HepG2 (cell line): ENCODE measurements at regions of chr20 and their contacts with region 1.

Region 1: DNA sequence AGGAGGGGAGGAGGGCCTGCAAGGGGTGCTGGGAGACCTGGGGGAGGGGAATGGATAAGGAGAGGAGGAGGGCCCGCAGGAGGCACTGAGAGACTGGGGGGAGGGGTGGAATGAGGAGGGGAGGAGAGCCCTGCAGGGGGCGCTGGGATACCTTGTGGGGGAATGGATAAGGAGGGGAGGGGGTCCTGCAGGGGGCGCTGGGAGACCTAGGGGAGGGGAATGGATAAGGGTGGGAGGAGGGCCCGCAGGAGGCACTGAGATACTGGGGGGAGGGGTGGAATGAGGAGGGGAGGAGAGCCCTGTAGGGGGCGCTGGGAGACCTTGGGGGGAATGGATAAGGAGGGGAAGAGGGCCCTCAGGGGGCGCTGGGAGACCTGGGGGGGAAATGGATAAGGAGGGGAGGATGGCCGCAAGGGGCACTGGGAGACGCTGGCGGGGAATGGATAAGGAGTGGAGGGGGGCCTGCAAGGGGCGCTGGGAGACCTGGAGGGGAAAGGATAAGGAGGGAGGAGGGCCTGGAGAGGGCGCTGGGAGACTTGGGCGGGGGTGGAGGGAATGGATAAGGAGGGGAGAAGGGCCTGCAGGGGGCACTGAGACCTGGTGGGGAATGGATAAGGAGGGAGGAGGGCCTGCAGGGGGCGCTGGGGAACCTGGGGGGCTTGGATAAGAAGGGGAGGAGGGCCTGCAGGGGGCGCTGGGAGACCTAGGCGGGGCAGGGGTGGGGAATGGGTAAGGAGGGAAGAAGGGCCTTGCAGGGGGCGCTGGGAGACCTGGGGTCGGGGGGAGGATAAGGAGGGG is 1.3 kb upstream of the CTCFL start:
- DNase-seq: peak; percentile 50
- ATAC-seq: peak; percentile 68
- H3K4me3 ChIP-seq: peak overlapping the region in 1 of 3 experiments; percentile 45; a peak in 1 of 6 replicates
- H3K27ac ChIP-seq: no peak overlapping the region
- H3K4me1 ChIP-seq: peaks cover 46% of the 10 kb centered on the region
- H3K27me3 ChIP-seq: peaks cover 2 to 23% of the 10 kb centered on the region in 2 experiments; a peak in 2 of 5 replicates
- CTCF ChIP-seq: peak; percentile 62
- EP300 ChIP-seq: no peak
- POLR2A ChIP-seq: no peak
- RAD21 ChIP-seq: no peak

Region 2: DNA sequence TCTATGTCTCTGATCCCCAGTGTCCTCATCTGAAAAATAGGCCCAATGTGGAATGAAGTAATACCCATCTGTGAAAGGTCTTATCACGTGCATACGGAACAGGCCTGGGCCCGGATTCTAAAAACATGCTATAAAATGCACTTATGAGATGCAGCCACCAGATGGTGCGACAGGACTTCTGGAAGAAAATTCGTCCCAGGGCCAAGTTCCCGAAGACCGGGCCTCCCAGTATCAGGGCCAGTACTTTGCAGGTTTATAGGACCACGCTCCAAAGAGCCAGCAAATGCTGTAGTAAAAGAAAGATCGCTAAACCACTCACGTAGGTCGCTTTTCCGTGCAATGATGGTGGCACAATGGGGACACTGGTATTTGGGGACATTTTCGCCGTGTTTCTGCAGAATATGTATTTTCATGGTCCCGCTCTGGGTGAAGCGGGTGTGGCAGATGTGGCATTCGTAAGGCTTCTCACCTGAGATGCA is 12.0 kb before region 1 on chr20:
- CTCF ChIA-PET with region 1: interaction called, 19 read pairs
- POLR2A ChIA-PET with region 1: no interaction called
- in situ Hi-C with region 1: no loop called
- intact Hi-C with region 1: no loop called
- DNase-seq: peak; percentile 73
- ATAC-seq: peak; percentile 87
- H3K4me3 ChIP-seq: no peak overlapping the region
- H3K27ac ChIP-seq: no peak overlapping the region
- H3K4me1 ChIP-seq: 0 out of 2 replicates have a peak, but pooled peaks cover 4% of the 10 kb centered on the region
- H3K27me3 ChIP-seq: peaks cover 0 to 43% of the 10 kb centered on the region in 2 experiments; a peak in 3 of 5 replicates
- CTCF ChIP-seq: peak; percentile 95
- EP300 ChIP-seq: no peak
- POLR2A ChIP-seq: no peak
- RAD21 ChIP-seq: peak; percentile 98

Region 3: GRCh38 chr20:57540890-57541580 is 14.7 kb after region 1 on chr20:
- CTCF ChIA-PET with region 1: no interaction called
- POLR2A ChIA-PET with region 1: no interaction called
- in situ Hi-C with region 1: no loop called
- intact Hi-C with region 1: no loop called
- DNase-seq: no peak
- ATAC-seq: peak; percentile 24
- H3K4me3 ChIP-seq: no peak overlapping the region
- H3K27ac ChIP-seq: no peak overlapping the region
- H3K4me1 ChIP-seq: peaks cover 32% of the 10 kb centered on the region
- H3K27me3 ChIP-seq: peaks cover 1 to 51% of the 10 kb centered on the region in 2 experiments; a peak in 2 of 5 replicates
- CTCF ChIP-seq: no peak
- EP300 ChIP-seq: no peak
- POLR2A ChIP-seq: no peak
- RAD21 ChIP-seq: no peak

Region 4: DNA sequence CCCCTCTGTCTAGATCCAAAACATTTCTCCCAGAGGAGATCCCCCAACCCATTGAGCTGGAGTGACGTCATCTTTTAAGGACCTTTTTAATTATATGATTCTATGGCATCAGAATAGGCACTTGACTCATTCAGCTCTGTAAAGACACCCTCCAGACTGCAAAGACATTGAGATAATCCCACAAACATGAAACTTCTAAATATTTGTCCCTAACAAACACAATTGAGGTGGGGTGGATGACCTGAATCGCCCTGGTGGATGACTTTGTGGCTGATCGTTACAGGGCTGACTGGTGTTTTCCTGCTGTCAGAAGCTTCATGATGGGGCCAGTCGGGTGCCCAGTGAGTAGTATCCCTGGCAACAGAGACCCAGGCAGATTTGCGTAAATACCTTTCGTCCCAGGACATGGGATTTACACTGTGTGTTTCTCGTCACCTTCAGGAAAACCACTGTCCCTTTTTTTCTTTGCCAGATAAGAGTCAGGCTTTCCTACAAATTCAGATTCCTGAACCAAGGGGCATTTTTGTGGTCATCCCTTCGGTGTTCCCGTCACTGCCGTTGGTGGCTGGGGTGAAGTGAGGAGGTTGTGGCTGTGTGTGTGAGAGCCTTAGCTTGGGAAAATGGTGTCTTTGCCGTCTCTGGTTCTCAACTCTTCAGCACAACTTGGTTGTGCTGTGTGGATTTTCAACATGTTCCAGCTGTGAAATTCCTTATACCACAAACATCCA is 29.3 kb after region 1 on chr20:
- CTCF ChIA-PET with region 1: interaction called, 4 read pairs
- POLR2A ChIA-PET with region 1: interaction called, 27 read pairs
- in situ Hi-C with region 1: no loop called
- intact Hi-C with region 1: no loop called
- DNase-seq: no peak
- ATAC-seq: peak; percentile 58
- H3K4me3 ChIP-seq: peak overlapping the region in 1 of 3 experiments; percentile 2; a peak in 1 of 6 replicates
- H3K27ac ChIP-seq: peak overlapping the region; percentile 15
- H3K4me1 ChIP-seq: peaks cover 65% of the 10 kb centered on the region
- H3K27me3 ChIP-seq: peaks cover 7 to 32% of the 10 kb centered on the region in 2 experiments; a peak in 4 of 5 replicates
- CTCF ChIP-seq: no peak
- EP300 ChIP-seq: peak; percentile 27 to 83; a peak in 2 of 4 replicates
- POLR2A ChIP-seq: no peak
- RAD21 ChIP-seq: no peak

Region 5: DNA sequence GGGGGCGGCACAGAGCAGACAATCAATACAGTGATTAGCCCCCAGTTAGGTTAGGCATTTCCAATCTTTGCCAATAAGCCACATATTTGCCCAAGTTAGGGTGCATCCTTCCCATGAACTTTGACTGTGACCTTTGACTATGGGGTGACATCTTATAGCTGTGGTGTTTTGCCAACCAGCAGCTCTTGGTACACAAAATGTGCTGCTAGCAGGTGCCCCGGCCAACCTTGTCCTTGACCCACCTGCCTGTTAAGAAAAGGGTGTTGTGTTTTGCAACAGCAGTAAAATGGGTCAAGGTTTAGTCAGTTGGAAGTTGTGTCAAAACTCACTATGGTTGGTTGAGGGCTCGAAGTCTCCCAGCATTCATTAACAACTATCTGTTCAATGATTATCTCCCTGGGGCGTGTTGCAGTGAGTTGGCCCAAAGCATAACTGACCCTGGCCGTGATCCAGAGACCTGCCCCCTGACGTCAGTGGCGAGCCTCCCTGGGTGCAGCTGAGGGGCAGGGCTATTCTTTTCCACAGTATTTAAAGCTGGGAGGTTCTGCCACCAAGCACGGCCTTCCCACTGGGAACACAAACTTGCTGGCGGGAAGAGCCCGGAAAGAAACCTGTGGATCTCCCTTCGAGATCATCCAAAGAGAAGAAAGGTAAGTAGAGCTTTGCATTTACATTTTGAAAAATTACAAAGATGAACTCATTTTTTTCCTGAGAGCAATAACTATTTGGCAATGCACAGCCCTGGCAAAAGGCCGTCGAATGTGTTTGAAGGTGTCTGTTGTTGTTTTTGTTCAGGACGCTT is 34.5 kb after region 1 on chr20 and contains the start of gene PCK1:
- CTCF ChIA-PET with region 1: interaction called, 4 read pairs
- POLR2A ChIA-PET with region 1: interaction called, 27 read pairs
- in situ Hi-C with region 1: no loop called
- intact Hi-C with region 1: no loop called
- DNase-seq: peak; percentile 89
- ATAC-seq: peak; percentile 89
- H3K4me3 ChIP-seq: peak within 1 kb of the TSS; percentile 47 to 68 (median 50)
- H3K27ac ChIP-seq: peak within 1 kb of the TSS; percentile 80
- H3K4me1 ChIP-seq: peaks cover 100% of the 10 kb centered on the region
- H3K27me3 ChIP-seq: peaks cover 7 to 10% of the 10 kb centered on the region in 2 experiments; a peak in 4 of 5 replicates
- CTCF ChIP-seq: no peak; the same call in 1 of the 2 replicates
- EP300 ChIP-seq: peak; percentile 95 to 98
- POLR2A ChIP-seq: peak; percentile 79 to 94; a peak in 3 of 4 replicates
- RAD21 ChIP-seq: no peak
- total RNA-seq, gene PCK1: 5.4 and 12.6 TPM in 2 replicates

Region 6: GRCh38 chr20:57573890-57574289 is 47.6 kb after region 1 on chr20:
- CTCF ChIA-PET with region 1: interaction called, 12 read pairs
- POLR2A ChIA-PET with region 1: no interaction called
- in situ Hi-C with region 1: no loop called
- intact Hi-C with region 1: no loop called
- DNase-seq: no peak
- ATAC-seq: peak; percentile 41
- H3K4me3 ChIP-seq: no peak overlapping the region
- H3K27ac ChIP-seq: no peak overlapping the region
- H3K4me1 ChIP-seq: peaks cover 62% of the 10 kb centered on the region
- H3K27me3 ChIP-seq: peaks cover 1 to 10% of the 10 kb centered on the region in 2 experiments; a peak in 3 of 5 replicates
- CTCF ChIP-seq: peak; percentile 71
- EP300 ChIP-seq: no peak
- POLR2A ChIP-seq: no peak
- RAD21 ChIP-seq: no peak

Region 7: GRCh38 chr20:57582432-57583305 is 56.4 kb after region 1 on chr20:
- CTCF ChIA-PET with region 1: interaction called, 6 read pairs
- POLR2A ChIA-PET with region 1: interaction called, 16 read pairs
- in situ Hi-C with region 1: no loop called
- intact Hi-C with region 1: no loop called
- DNase-seq: peak; percentile 24
- ATAC-seq: peak; percentile 56
- H3K4me3 ChIP-seq: peak overlapping the region in 1 of 3 experiments; percentile 30; a peak in 1 of 6 replicates
- H3K27ac ChIP-seq: peak overlapping the region; percentile 53
- H3K4me1 ChIP-seq: peaks cover 100% of the 10 kb centered on the region
- H3K27me3 ChIP-seq: no peaks in the 10 kb centered on the region
- CTCF ChIP-seq: peak; percentile 94
- EP300 ChIP-seq: peak in 1 of 2 experiments; percentile 70; a peak in 2 of 4 replicates
- POLR2A ChIP-seq: no peak
- RAD21 ChIP-seq: peak; percentile 73; the same call in 1 of the 2 replicates

Region 8: GRCh38 chr20:57596998-57597939 is 71.0 kb after region 1 on chr20:
- CTCF ChIA-PET with region 1: interaction called, 140 read pairs
- POLR2A ChIA-PET with region 1: no interaction called
- in situ Hi-C with region 1: no loop called
- intact Hi-C with region 1: no loop called
- DNase-seq: peak; percentile 43
- ATAC-seq: peak; percentile 75
- H3K4me3 ChIP-seq: peak overlapping the region in 1 of 3 experiments; percentile 27; a peak in 1 of 6 replicates
- H3K27ac ChIP-seq: no peak overlapping the region
- H3K4me1 ChIP-seq: peaks cover 25% of the 10 kb centered on the region
- H3K27me3 ChIP-seq: peaks cover 0 to 36% of the 10 kb centered on the region in 2 experiments; a peak in 4 of 5 replicates
- CTCF ChIP-seq: peak; percentile 98
- EP300 ChIP-seq: 0 out of 4 replicates have a peak, but pooled peaks of 1 of the 2 experiments have one; percentile 16
- POLR2A ChIP-seq: no peak
- RAD21 ChIP-seq: peak; percentile 97

Region 9: GRCh38 chr20:57736738-57737364 is 210.6 kb after region 1 on chr20:
- CTCF ChIA-PET with region 1: no interaction called
- POLR2A ChIA-PET with region 1: no interaction called
- in situ Hi-C with region 1: no loop called
- intact Hi-C with region 1: no loop called
- DNase-seq: no peak
- ATAC-seq: no peak
- H3K4me3 ChIP-seq: no peak overlapping the region
- H3K27ac ChIP-seq: no peak overlapping the region
- H3K4me1 ChIP-seq: no peaks in the 10 kb centered on the region
- H3K27me3 ChIP-seq: peaks cover 3 to 46% of the 10 kb centered on the region in 2 experiments; a peak in 4 of 5 replicates
- CTCF ChIP-seq: no peak
- EP300 ChIP-seq: no peak
- POLR2A ChIP-seq: no peak
- RAD21 ChIP-seq: no peak